Activated CD8-positive, alpha-beta T cell treated with anti-CD3 and anti-CD28 coated beads for 36 hours (primary cell): ENCODE measurements at regions of chr5 and their contacts with region 1.

Region 1: DNA sequence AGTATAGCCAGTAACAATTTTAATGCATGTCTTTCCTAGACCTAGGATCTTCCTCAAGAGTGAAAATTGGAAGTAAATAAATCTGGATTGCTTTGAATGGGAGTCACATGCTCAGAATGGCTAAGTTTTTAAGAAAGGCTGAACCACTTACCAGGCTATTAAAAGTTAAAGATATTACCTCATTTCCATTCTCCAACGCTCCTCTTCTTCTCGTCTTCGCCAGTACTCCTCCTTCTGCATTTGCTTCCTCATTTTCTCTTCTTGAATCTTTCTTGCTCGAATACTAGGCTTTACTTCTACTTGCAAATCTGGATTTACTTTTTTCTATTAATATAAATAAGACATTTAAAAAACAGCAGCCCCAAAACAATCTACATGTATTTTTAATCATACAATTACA is 49.6 kb downstream of the ZFR start:
- DNase-seq: no peak
- ATAC-seq: no peak
- H3K4me3 Mint-ChIP-seq: no peak overlapping the region
- H3K27ac Mint-ChIP-seq: no peak overlapping the region
- H3K4me1 Mint-ChIP-seq: no peaks in the 10 kb centered on the region
- H3K27me3 Mint-ChIP-seq: no peaks in the 10 kb centered on the region
- CTCF ChIP-seq: no peak

Region 2: DNA sequence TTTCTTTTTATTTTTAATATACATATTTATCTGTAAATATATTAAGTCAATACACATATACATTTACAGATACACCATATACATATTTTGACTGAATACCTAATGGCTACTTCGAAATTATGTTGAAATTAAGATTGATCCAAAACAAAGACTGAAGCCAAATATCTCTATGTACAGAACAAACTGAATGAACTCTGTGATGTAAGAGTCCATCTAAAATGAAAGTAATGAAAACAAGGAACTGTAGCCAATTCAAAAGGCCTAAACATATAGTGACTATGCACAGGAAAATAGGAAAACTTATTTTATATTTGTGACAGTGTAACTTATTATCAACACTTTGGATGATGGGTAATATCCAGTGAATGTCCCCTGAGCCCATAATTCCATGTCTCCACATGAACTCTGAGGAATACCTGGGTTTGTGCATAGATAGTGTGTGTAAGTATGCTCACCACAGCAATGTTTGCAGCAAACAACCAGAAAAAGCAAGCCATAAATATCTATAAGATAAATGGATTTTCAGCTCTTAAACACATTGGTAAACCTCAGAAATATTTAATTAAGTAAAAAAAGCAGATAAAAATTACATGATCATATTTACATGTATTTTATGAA is 1718.6 kb before region 1 on chr5:
- CTCF ChIA-PET with region 1: no interaction called
- POLR2A ChIA-PET with region 1: no interaction called
- intact Hi-C with region 1: no loop called
- DNase-seq: no peak
- ATAC-seq: no peak
- H3K4me3 Mint-ChIP-seq: no peak overlapping the region
- H3K27ac Mint-ChIP-seq: no peak overlapping the region
- H3K4me1 Mint-ChIP-seq: no peaks in the 10 kb centered on the region
- H3K27me3 Mint-ChIP-seq: no peaks in the 10 kb centered on the region
- CTCF ChIP-seq: no peak

Region 3: DNA sequence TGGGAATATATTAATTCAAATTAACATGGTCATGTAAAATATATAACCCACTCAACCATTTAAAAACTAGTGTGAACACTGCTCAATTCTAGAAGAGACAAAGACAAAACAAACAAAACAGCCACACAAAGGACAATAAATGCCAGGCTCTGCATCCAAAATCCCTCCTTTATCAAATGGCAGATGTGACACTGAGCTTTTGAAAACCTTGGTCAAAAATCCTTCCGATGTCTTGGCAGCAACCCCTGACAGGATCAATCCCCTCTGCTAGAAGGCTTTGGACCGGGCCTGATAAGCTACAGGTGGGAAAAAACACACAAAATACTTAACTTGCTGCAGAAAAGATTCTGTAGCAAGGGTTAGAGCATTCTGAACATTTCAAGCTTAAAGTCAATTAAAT is 11.9 kb before region 1 on chr5:
- CTCF ChIA-PET with region 1: no interaction called
- POLR2A ChIA-PET with region 1: interaction called, 3 read pairs
- intact Hi-C with region 1: loop called (anchors 1 kb)
- DNase-seq: no peak
- ATAC-seq: no peak
- H3K4me3 Mint-ChIP-seq: no peak overlapping the region
- H3K27ac Mint-ChIP-seq: no peak overlapping the region
- H3K4me1 Mint-ChIP-seq: no peaks in the 10 kb centered on the region
- H3K27me3 Mint-ChIP-seq: no peaks in the 10 kb centered on the region
- CTCF ChIP-seq: no peak

Region 4: GRCh38 chr5:32462618-32463017 is 67.6 kb after region 1 on chr5:
- CTCF ChIA-PET with region 1: no interaction called
- POLR2A ChIA-PET with region 1: no interaction called
- intact Hi-C with region 1: no loop called
- DNase-seq: peak; percentile 74
- ATAC-seq: peak; percentile 99
- H3K4me3 Mint-ChIP-seq: no peak overlapping the region
- H3K27ac Mint-ChIP-seq: peak overlapping the region; percentile 91
- H3K4me1 Mint-ChIP-seq: peaks cover 13% of the 10 kb centered on the region
- H3K27me3 Mint-ChIP-seq: peaks cover 1% of the 10 kb centered on the region
- CTCF ChIP-seq: no peak